Right ventricle myocardium inferior (tissue), 1 donor: ENCODE measurements at regions of chr12 and their contacts with region 1.

Region 1: GRCh38 chr12:55724226-55724939 is 4.2 kb downstream of the RDH5 start:
- DNase-seq: peak; percentile 89
- ATAC-seq: no peak

Region 2: GRCh38 chr12:55652352-55652751 is 72.0 kb before region 1 on chr12:
- intact Hi-C with region 1: no loop called
- DNase-seq: no peak
- ATAC-seq: no peak

Region 3: DNA sequence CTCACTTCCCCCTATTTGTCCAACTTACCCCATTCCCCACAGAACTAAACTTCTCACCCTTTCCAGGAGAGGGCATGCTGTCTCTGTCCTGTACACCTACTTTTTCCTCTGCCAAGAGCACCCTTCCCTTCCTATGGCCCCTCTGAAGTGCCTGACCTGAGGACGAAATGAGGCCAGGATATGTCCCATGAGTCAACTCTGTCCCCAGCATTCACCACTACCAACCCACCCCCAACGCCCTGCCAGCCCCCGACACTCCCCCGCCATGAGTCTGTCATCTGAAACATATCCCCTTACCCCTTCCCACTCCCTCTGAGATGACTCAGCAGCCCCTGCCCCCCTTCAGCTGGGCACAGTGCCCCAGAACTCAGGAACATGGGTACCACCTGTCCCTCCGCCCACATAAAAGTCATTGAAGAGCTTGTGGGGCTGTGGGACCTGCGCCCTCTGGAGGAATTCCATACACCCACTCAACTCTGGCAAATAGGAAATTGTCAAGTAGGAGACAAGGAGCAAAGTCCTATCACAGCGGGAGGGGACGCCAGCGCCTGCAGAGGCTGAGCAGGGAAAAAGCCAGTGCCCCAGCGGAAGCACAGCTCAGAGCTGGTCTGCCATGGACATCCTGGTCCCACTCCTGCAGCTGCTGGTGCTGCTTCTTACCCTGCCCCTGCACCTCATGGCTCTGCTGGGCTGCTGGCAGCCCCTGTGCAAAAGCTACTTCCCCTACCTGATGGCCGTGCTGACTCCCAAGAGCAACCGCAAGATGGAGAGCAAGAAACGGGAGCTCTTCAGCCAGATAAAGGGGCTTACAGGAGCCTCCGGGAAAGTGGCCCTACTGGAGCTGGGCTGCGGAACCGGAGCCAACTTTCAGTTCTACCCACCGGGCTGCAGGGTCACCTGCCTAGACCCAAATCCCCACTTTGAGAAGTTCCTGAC is 43.0 kb before region 1 on chr12:
- intact Hi-C with region 1: loop called (anchors 5 kb)
- DNase-seq: peak; percentile 78
- ATAC-seq: peak; percentile 79

Region 4: GRCh38 chr12:55707841-55708694 is 16.3 kb before region 1 on chr12 and contains the start of gene ITGA7:
- intact Hi-C with region 1: loop called (anchors 2 kb)
- DNase-seq: peak; percentile 87
- ATAC-seq: peak; percentile 55
- total RNA-seq, gene ITGA7: 479 TPM

Region 5: DNA sequence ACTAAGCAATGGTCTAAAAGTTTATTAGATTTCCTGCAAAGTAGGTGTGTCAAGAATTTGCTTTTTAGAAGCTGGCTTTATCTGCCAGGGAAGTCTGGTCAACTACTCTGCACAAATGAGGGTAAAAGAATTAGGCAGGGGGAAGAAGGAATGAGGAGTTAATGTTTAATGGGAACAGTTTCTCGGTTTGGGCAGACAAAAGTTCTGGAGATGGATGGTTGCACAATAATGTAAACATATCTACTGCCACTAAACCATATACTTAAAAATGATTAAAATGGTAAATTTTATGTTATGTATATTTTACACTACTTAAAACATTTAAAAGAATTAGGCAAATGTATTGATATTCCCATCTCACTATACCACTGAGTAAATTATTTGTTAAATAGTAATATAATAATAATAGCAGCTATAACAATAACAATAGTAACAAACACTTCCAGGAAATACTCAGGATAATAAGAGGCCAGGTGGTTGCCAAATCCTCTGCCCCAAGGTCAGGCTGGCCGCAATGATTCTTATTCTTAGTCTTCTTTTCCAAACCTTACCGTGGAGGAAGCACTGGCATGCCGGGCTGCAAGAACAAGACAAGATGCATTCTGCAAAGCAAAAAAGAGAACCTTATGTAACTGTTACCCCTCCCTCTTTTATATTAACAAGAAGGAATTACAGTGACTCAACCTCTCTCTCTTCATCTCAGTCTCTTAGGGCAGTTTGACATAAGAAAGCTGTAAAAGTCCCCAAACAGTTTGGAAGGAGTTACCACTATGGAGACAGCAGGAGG is 561.9 kb after region 1 on chr12:
- intact Hi-C with region 1: no loop called
- DNase-seq: no peak
- ATAC-seq: no peak